PC-9 (cell line): ENCODE measurements at regions of chr9 and their contacts with region 1.

Region 1: GRCh38 chr9:33159760-33160127 is 7.4 kb downstream of the B4GALT1 start:
- DNase-seq: peak; percentile 55 to 73
- H3K4me3 ChIP-seq: peak overlapping the region; percentile 93; the same call in 1 of the 2 replicates
- H3K27ac ChIP-seq: peak overlapping the region; percentile 99
- H3K4me1 ChIP-seq: peaks cover 81% of the 10 kb centered on the region
- H3K27me3 ChIP-seq: no peaks in the 10 kb centered on the region
- CTCF ChIP-seq: no peak

Region 2: GRCh38 chr9:33101108-33101951 is 58.4 kb before region 1 on chr9:
- CTCF ChIA-PET with region 1: no interaction called
- POLR2A ChIA-PET with region 1: no interaction called
- intact Hi-C with region 1: loop called (anchors 1 kb)
- DNase-seq: peak; percentile 68 to 79
- H3K4me3 ChIP-seq: no peak overlapping the region
- H3K27ac ChIP-seq: peak overlapping the region; percentile 85
- H3K4me1 ChIP-seq: peaks cover 32% of the 10 kb centered on the region
- H3K27me3 ChIP-seq: no peaks in the 10 kb centered on the region
- CTCF ChIP-seq: no peak

Region 3: DNA sequence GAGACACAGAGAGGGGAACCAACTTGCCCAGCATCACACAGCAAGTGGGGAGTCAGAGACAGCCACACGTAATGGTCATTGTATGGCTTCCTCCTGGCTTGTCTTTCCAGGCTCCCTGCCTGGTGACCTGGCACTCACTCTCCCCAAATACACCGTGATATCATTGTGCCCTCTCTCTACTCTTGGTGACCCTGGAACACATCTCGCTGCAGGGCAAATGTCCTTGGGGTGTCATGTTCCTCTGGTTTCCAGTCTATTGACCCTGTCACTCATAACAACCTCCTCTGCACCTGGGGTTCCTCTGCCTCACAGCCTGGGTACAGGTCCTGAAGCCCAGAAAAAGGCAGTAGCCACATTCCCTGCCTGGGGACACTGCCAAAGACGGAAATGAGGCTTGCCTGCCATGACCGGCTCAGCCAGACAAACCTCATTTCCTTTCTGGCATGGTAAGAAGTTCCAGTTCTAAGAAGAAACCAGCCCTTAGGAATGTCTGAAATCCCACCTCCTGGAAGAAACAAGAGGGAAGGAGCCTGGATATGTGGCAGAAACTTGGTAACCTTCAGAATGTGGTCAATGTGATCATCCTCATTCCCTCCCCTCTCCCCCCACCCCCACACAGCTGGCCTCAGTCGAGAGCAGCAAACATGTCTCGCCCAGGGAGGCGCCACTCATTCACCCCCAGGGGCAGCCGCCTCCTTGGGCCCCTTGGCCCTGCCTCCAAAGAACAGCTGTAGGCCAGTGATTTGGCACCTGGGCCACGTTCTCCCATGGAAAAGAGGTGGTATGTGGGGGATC is 52.7 kb before region 1 on chr9:
- CTCF ChIA-PET with region 1: no interaction called
- POLR2A ChIA-PET with region 1: no interaction called
- intact Hi-C with region 1: loop called (anchors 1 kb)
- DNase-seq: peak; percentile 75 to 81
- H3K4me3 ChIP-seq: no peak overlapping the region
- H3K27ac ChIP-seq: peak overlapping the region; percentile 44
- H3K4me1 ChIP-seq: peaks cover 42% of the 10 kb centered on the region
- H3K27me3 ChIP-seq: no peaks in the 10 kb centered on the region
- CTCF ChIP-seq: no peak